Transverse colon (tissue), 4 donors: ENCODE measurements at regions of chr19 and their contacts with region 1.

Region 1: DNA sequence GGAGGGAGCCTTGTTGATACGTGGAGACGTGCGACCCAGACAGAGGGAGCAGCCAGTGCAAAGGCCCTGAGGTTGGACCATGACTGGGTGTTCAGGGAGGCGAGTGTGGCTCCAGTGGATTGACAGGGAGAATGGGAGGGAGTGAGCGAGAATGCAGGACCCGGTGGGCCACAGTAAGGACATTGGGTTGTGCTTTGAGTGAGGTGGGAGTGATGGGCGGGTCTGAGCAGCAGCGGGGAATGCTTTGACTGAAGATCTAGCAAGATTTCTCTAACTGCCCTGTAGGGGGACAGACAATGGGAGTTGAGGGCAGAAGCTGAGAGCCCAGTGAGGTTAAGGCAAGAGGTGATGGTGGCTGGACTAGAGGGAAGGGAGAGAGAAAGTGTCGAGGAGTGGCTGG is 7.7 kb upstream of the NANOS2 start:
- DNase-seq: no peak
- H3K4me3 ChIP-seq: no peak overlapping the region
- H3K27ac ChIP-seq: no peak overlapping the region
- H3K4me1 ChIP-seq: no peaks in the 10 kb centered on the region
- H3K27me3 ChIP-seq: peaks cover 26% of the 10 kb centered on the region
- CTCF ChIP-seq: no peak
- EP300 ChIP-seq: no peak
- POLR2A ChIP-seq: no peak

Region 2: DNA sequence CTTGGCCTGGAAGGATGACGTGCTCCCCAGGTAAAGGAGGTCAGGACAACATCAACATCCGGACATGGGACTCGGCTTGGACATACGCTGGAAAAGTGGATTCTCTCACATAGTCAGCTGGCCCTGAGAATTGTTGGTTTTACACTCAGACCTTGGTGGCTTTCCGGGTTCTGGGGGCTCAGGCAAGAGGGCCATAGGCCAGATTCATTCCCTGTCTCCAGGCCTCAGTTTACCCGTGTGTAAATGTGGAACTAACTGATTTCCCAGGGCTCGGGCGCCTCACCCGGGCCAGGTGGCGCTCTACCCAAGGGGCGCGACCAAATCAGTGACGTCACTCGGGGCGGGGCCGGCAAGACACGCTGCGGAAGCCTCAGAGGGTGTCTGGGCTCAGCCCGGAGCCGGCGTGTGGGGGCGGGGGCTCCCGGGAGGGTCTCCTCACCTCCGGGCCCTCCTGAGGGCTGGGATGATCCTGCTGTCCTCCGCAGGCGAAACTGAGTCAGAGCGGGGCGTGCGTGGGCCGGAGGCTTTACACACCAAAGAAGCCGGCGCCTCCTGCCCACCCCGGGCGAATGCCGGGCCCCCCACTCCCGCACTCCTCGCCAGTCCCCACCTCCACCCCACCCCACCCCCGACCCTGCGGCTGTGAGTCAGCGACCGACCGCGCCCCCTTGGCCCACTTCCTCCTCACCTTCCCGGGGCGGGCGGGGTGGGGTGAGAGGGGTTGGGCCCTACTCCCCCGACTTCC is 415.9 kb before region 1 on chr19:
- in situ Hi-C with region 1: no loop called
- intact Hi-C with region 1: no loop called
- DNase-seq: peak; percentile 98
- H3K4me3 ChIP-seq: peak overlapping the region; percentile 93 to 100 (median 97)
- H3K27ac ChIP-seq: peak overlapping the region; percentile 98 to 100 (median 99)
- H3K4me1 ChIP-seq: peaks cover 16 to 29% (median 27%) of the 10 kb centered on the region in 4 donors
- H3K27me3 ChIP-seq: no peaks in the 10 kb centered on the region
- CTCF ChIP-seq: peak in 4 of 5 experiments; percentile 24 to 45 (median 38)
- EP300 ChIP-seq: no peak
- POLR2A ChIP-seq: peak; percentile 90

Region 3: DNA sequence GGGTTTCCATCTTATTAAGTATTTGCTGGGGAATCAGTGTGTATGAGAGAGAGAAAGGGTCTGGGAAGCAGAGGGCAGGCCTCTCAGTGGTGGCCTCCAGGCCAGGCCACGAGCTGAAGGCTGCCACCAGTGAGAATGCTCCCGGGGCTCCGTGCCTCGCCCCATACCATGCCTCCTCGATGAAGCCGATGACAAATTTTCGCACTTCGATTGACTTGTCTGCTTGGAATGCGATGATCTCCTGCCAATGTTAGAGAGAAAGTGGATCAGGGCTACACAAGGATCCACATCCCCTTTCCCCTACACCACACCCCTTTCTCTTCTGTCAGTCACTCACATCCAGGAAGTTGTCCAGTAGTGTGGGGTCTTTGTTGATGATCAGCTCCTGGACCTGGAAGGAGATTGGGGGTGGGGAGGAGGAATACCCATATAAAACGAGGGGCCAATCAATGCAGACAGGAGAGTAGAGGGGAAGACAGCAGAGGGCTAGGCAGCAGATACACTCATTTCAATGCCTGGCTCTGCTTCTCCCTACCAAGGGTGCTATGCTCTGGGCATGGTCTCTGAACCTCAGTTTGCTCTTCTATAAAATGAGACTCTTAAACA is 70.0 kb before region 1 on chr19:
- in situ Hi-C with region 1: no loop called
- intact Hi-C with region 1: no loop called
- DNase-seq: no peak
- H3K4me3 ChIP-seq: no peak overlapping the region
- H3K27ac ChIP-seq: no peak overlapping the region
- H3K4me1 ChIP-seq: no peaks in the 10 kb centered on the region
- H3K27me3 ChIP-seq: no peaks in the 10 kb centered on the region
- CTCF ChIP-seq: no peak
- EP300 ChIP-seq: no peak
- POLR2A ChIP-seq: no peak

Region 4: GRCh38 chr19:45960595-45961235 is 38.4 kb after region 1 on chr19:
- in situ Hi-C with region 1: no loop called
- intact Hi-C with region 1: loop called (anchors 1 kb)
- DNase-seq: no peak
- H3K4me3 ChIP-seq: no peak overlapping the region
- H3K27ac ChIP-seq: no peak overlapping the region
- H3K4me1 ChIP-seq: no peaks in the 10 kb centered on the region
- H3K27me3 ChIP-seq: peaks cover 47% of the 10 kb centered on the region
- CTCF ChIP-seq: no peak
- EP300 ChIP-seq: no peak
- POLR2A ChIP-seq: no peak